ENCODE measurements at regions of chr17 and their contacts with region 1.

Region 1: GRCh38 chr17:75261336-75262111 is at the starts of genes GGA3 and MRPS7:
- DNase-seq: peak; percentile 97
- ATAC-seq: peak; percentile 96
- H3K4me3 Mint-ChIP-seq: peak within 1 kb of the TSS; percentile 94
- H3K27ac Mint-ChIP-seq: peak within 1 kb of the TSS; percentile 99
- H3K4me1 Mint-ChIP-seq: peaks cover 44% of the 10 kb centered on the region
- H3K27me3 Mint-ChIP-seq: no peaks in the 10 kb centered on the region
- total RNA-seq, gene GGA3: 84.6 to 90.2 TPM
- total RNA-seq, gene MRPS7: 49.5 to 56.9 TPM

Region 2: DNA sequence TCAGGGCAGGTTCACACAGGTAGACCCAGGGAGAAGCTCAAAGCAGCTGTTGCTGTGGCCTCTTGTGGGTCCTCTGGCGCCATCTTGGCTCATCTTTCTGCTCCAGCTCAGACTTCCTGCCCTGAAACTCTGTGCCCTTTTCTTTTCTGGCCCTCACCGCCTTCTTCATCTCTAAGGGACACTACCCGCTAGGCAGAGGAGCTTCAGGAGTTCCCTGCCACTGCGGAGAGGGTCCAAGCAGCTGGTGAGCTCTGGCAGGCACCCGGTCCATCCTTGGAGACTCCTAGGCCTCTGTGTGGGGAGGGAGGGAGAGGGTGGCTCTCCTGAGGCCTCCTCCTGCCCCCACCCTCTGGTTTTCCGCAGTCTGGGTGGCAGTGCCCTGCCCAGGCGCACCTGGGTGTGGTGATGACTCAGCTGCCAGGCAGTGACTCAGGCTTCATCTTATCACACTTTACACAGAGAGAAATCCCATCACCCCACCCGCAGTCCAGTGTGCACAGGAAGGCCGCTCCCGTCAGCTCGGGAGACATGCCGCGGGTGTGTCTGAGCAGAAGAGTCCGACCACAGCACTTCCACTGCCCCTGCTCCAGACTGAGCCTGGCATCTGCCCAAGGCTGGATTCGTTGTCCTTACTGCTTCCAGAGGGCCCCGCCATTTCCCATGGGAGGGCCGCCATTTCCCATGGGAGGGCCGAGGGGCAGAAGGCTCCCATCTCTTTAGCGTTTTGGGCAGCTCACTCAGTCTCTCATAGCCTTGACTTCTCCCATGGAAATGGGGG is 137.3 kb before region 1 on chr17:
- CTCF ChIA-PET with region 1: no interaction called
- DNase-seq: peak; percentile 56
- ATAC-seq: peak; percentile 53
- H3K4me3 Mint-ChIP-seq: no peak overlapping the region
- H3K27ac Mint-ChIP-seq: peak overlapping the region; percentile 71
- H3K4me1 Mint-ChIP-seq: peaks cover 29% of the 10 kb centered on the region
- H3K27me3 Mint-ChIP-seq: no peaks in the 10 kb centered on the region

Region 3: GRCh38 chr17:75238684-75239191 is 22.8 kb before region 1 on chr17:
- CTCF ChIA-PET with region 1: interaction called, 13 read pairs
- DNase-seq: peak; percentile 72
- ATAC-seq: peak; percentile 74
- H3K4me3 Mint-ChIP-seq: no peak overlapping the region
- H3K27ac Mint-ChIP-seq: peak overlapping the region; percentile 70
- H3K4me1 Mint-ChIP-seq: peaks cover 32% of the 10 kb centered on the region
- H3K27me3 Mint-ChIP-seq: no peaks in the 10 kb centered on the region

Region 4: DNA sequence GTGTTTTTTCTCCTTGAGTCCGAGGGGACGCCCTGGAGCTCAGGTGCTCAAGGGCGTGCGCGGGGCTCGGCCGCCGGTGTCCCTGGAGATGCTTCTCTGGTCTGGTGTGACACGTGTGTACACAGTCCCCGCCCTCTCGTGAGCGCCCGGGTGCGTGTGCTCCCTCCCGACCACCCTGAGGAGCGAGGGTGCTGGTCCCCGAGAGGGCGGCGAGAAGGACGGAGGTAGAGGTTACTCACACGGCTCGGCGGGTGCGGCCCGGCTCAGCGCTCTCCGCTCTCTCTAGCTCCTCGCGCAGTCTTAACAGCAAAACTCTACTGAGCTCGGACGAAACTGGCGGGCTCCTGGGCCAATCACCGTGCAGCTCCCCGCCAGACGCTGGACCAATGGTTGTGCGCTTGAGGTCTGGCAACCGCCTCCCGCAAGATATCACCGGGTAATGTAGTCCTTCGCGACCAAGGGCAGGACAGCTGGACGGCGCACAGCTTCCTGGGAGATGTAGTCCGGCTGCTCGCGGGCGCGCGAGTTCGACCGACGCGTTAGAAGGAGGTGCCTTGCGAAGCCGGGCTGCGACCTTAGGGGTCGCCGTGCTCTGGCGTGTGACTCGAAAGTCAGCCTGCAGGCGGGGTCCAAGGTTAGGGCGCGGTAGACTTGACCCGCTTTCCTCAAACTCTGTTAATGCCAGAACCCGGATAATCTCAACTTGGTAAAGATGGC is 27.7 kb after region 1 on chr17 and contains the start of gene SLC25A19:
- CTCF ChIA-PET with region 1: interaction called, 11 read pairs
- DNase-seq: peak; percentile 100
- ATAC-seq: peak; percentile 92
- H3K4me3 Mint-ChIP-seq: peak within 1 kb of the TSS; percentile 97
- H3K27ac Mint-ChIP-seq: peak within 1 kb of the TSS; percentile 100
- H3K4me1 Mint-ChIP-seq: peaks cover 24% of the 10 kb centered on the region
- H3K27me3 Mint-ChIP-seq: no peaks in the 10 kb centered on the region
- total RNA-seq, gene SLC25A19: 46.3 to 66.4 TPM

Region 5: DNA sequence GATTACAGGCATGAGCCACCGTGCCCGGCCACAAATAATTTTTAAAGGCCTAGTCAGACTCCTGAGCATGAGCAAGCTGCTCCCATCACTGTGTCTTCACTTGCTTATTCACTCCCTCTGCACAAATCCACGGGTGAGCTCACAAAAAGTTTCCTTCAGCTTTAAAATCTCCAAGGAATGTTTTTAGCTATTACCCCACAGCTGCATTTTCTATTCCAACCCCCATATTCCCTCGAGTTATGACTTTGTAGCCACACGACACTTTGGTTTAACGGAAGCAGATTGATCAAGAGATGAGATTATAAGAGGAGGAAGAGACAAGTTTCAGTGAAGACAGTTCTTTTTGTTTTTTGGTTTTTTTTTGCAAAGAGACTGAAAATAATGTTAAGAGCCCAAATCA is 76.8 kb after region 1 on chr17:
- CTCF ChIA-PET with region 1: no interaction called
- DNase-seq: no peak
- ATAC-seq: peak; percentile 65
- H3K4me3 Mint-ChIP-seq: peak overlapping the region; percentile 68
- H3K27ac Mint-ChIP-seq: peak overlapping the region; percentile 81
- H3K4me1 Mint-ChIP-seq: peaks cover 70% of the 10 kb centered on the region
- H3K27me3 Mint-ChIP-seq: no peaks in the 10 kb centered on the region

Region 6: DNA sequence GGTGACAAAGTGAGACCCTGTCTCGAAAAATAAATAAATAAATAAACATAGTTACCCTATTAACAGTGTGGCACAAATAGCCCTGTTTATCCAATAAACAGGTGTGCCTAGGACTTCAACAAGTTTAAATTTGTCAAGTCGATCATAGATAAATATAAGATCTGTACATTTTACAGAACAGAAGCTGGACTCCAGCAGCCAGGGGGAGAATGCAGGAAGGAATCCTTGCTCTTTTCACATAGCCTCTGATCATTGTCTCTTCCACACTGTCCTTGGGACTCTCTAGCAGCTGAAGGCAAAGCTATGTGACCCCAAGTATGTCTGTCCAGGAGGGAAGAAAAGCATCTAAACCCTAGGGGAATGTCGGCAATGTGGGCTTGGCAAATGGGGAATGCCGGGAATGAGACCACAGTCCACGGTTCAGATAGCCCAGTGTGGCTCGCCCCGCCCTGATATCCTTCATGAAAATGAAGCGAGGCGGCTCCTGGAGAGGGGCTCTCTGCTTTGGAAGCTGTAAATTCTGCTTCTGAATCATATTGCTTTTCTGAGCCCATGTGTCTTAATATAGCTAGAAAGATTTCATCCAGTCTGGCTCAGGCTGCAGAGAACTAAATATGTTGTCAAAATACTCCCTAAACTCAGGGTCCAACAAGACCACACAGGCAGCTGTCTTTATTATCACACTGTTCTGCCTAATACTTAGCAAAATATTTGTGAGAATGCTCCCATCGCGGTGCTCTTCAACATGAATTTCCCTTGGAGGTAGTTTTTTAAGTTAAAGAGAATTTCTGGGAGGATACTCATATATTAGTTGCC is 168.8 kb after region 1 on chr17:
- CTCF ChIA-PET with region 1: no interaction called
- DNase-seq: no peak
- ATAC-seq: no peak
- H3K4me3 Mint-ChIP-seq: no peak overlapping the region
- H3K27ac Mint-ChIP-seq: no peak overlapping the region
- H3K4me1 Mint-ChIP-seq: peaks cover 22% of the 10 kb centered on the region
- H3K27me3 Mint-ChIP-seq: peaks cover 34% of the 10 kb centered on the region